ENCODE measurements at regions of chr1 and their contacts with region 1.

Region 1: DNA sequence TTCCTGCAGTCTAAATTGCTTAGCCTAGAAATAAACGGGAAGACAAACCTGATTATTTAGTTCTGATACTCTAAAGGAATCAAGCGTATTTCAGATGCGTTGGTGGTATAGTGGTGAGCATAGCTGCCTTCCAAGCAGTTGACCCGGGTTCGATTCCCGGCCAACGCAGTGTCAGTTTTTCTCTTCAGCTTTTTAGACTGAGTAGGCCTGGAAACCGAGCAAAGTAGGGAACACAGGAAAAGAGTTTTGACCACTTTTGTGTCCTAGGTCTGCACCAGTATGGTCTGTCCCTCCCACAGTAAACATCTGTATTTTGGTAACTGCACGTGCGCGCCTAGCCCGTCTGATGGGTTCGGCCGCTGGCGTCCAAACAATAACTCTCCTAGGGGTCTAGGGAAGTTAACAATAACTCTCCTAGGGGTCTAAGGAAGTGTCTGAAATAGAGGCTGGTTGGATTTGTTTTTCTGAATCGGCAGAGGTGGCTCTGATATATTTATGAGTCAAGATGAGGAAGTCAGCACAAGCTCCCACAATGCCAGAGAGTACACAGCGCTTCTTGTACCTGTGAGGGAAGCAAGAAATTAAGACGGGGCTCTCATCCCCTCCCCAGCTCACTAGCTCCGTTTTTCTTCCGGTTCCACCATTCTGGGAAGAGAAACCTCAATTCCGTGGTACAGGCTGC is 15.6 kb upstream of the HJV start:
- DNase-seq: peak; percentile 38 to 94 (median 80)
- ATAC-seq: peak; percentile 51 to 68
- H3K4me3 Mint-ChIP-seq: peak overlapping the region; percentile 92 to 99 (median 96)
- H3K27ac Mint-ChIP-seq: peak overlapping the region; percentile 90 to 100 (median 96)
- H3K4me1 Mint-ChIP-seq: peaks cover 32 to 43% (median 38%) of the 10 kb centered on the region in 4 donors
- H3K27me3 Mint-ChIP-seq: peaks cover 0 to 17% (median 0%) of the 10 kb centered on the region in 5 donors

Region 2: DNA sequence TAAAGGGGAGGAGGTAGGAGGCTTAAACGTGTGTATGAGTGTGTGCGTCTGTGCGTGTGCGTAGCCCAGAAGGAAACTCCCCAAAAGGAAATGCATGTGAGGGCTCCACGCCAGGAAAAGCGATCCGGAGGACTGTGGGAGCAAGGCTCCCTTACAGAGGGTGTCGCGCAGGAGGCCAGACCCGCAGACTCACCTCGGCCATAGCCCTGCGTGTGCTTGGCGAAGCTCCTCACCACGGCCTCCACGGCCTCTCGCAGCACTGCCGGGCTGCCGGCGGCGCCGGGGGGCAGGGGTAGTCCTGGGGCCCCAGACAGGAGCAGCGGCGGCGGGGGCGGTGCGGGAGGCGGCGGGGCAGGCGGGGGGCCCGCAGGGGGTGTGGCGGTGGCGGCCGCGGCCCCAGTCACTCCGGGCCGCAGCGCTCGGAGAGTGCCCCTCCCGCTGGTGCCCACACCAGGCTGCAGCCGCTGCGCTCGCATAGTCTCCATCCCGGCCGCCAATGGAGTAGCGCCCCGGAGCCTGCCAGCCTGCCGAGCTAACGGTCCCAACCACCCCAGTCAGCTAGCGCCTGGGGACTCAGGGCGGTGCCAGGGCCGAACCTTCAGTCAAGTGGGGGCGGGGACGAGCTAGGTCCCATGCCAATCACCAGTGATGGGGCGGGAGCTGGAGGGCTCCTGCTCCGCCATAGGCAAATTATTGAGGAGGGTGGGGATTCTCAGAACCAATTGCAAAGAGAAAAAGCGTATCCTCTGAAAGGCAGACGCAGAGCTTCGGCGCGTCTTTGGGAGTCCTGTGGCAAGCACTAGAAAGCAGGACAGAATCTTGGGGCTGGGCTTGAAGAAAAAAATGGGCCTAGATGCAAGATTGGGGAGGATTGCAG is 79.4 kb before region 1 on chr1 and contains the start of gene LIX1L:
- POLR2A ChIA-PET with region 1: interaction called, 11 read pairs
- DNase-seq: peak; percentile 88 to 97 (median 94)
- ATAC-seq: peak; percentile 83 to 86
- H3K4me3 Mint-ChIP-seq: peak within 1 kb of the TSS; percentile 88 to 99 (median 94)
- H3K27ac Mint-ChIP-seq: peak within 1 kb of the TSS; percentile 87 to 99 (median 98)
- H3K4me1 Mint-ChIP-seq: peaks cover 42 to 85% (median 73%) of the 10 kb centered on the region in 4 donors
- H3K27me3 Mint-ChIP-seq: no peaks in the 10 kb centered on the region
- polyA plus RNA-seq, gene LIX1L: 26.3 to 31.7 (median 29.3) TPM

Region 3: GRCh38 chr1:145963995-145964901 is 72.9 kb before region 1 on chr1 and contains the starts of genes ANKRD34A and POLR3GL:
- POLR2A ChIA-PET with region 1: interaction called, 20 read pairs
- DNase-seq: peak; percentile 75 to 95 (median 89)
- ATAC-seq: peak; percentile 84 to 87
- H3K4me3 Mint-ChIP-seq: peak within 1 kb of the TSS; percentile 88 to 99 (median 92)
- H3K27ac Mint-ChIP-seq: peak within 1 kb of the TSS; percentile 86 to 99 (median 98)
- H3K4me1 Mint-ChIP-seq: peaks cover 39 to 68% (median 66%) of the 10 kb centered on the region in 4 donors
- H3K27me3 Mint-ChIP-seq: no peaks in the 10 kb centered on the region
- polyA plus RNA-seq, gene ANKRD34A: 0.12 to 0.38 (median 0.25) TPM
- polyA plus RNA-seq, gene POLR3GL: 98.4 to 101 (median 98.6) TPM

Region 4: GRCh38 chr1:145978854-145979759 is 58.0 kb before region 1 on chr1:
- POLR2A ChIA-PET with region 1: interaction called, 13 read pairs
- DNase-seq: peak; percentile 42 to 91 (median 78)
- ATAC-seq: peak; percentile 74 to 79
- H3K4me3 Mint-ChIP-seq: no peak overlapping the region
- H3K27ac Mint-ChIP-seq: no peak overlapping the region
- H3K4me1 Mint-ChIP-seq: peaks cover 2 to 45% (median 39%) of the 10 kb centered on the region in 4 donors
- H3K27me3 Mint-ChIP-seq: no peaks in the 10 kb centered on the region

Region 5: GRCh38 chr1:145996433-145997015 is 40.6 kb before region 1 on chr1 and contains the start of gene TXNIP:
- POLR2A ChIA-PET with region 1: interaction called, 83 read pairs
- DNase-seq: peak; percentile 88 to 98 (median 91)
- ATAC-seq: peak; percentile 67 to 85
- H3K4me3 Mint-ChIP-seq: peak within 1 kb of the TSS; percentile 91 to 100 (median 99)
- H3K27ac Mint-ChIP-seq: peak within 1 kb of the TSS; percentile 95 to 100 (median 99)
- H3K4me1 Mint-ChIP-seq: peaks cover 31 to 72% (median 51%) of the 10 kb centered on the region in 4 donors
- H3K27me3 Mint-ChIP-seq: no peaks in the 10 kb centered on the region
- polyA plus RNA-seq, gene TXNIP: 4,009 to 5,114 (median 5,016) TPM

Region 6: DNA sequence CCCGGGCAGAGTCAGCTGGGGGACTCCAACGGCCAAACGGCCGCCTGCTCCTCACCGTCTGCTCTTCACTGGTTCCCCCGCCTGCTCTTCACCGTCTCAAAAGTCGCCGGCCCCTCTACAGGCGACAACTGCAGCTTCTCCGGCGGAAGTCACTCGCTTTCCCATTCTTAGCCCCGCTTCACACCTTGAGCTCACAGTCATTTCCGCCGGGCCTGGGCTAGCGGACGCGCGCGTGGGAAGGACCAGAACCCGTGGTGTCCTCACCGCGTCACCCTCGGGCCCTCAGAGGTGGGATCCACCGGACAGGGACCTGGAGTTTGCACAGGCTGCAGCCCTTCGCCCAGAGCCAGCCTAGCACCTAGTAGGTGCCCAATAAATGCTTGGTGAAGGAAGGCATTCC is 12.3 kb after region 1 on chr1:
- POLR2A ChIA-PET with region 1: interaction called, 114 read pairs
- DNase-seq: no peak
- ATAC-seq: no peak
- H3K4me3 Mint-ChIP-seq: peak overlapping the region in 1 of 10 donors; percentile 38
- H3K27ac Mint-ChIP-seq: peak overlapping the region in 2 of 10 donors; percentile 3 to 76
- H3K4me1 Mint-ChIP-seq: peaks cover 9 to 33% (median 27%) of the 10 kb centered on the region in 4 donors
- H3K27me3 Mint-ChIP-seq: no peaks in the 10 kb centered on the region

Measured in naive thymus-derived CD8-positive, alpha-beta T cell (primary cell).